Activated B cell treated with CpG ODN at 0.5 μM for 24 hours (primary cell): ENCODE measurements at regions of chr3 and their contacts with region 1.

Region 1: GRCh38 chr3:30112902-30113484 is 493.4 kb upstream of the TGFBR2 start:
- DNase-seq: no peak
- ATAC-seq: no peak
- H3K4me3 Mint-ChIP-seq: no peak overlapping the region
- H3K27ac Mint-ChIP-seq: no peak overlapping the region
- H3K4me1 Mint-ChIP-seq: peaks cover 10% of the 10 kb centered on the region
- H3K27me3 Mint-ChIP-seq: no peaks in the 10 kb centered on the region
- CTCF ChIP-seq: no peak

Region 2: GRCh38 chr3:30084971-30085403 is 28.0 kb before region 1 on chr3:
- CTCF ChIA-PET with region 1: no interaction called
- POLR2A ChIA-PET with region 1: no interaction called
- intact Hi-C with region 1: no loop called
- DNase-seq: no peak
- ATAC-seq: no peak
- H3K4me3 Mint-ChIP-seq: no peak overlapping the region
- H3K27ac Mint-ChIP-seq: no peak overlapping the region
- H3K4me1 Mint-ChIP-seq: no peaks in the 10 kb centered on the region
- H3K27me3 Mint-ChIP-seq: peaks cover 8% of the 10 kb centered on the region
- CTCF ChIP-seq: no peak

Region 3: GRCh38 chr3:30319713-30320112 is 206.7 kb after region 1 on chr3:
- CTCF ChIA-PET with region 1: no interaction called
- POLR2A ChIA-PET with region 1: no interaction called
- intact Hi-C with region 1: loop called (anchors 1 kb)
- DNase-seq: no peak
- ATAC-seq: peak; percentile 98
- H3K4me3 Mint-ChIP-seq: no peak overlapping the region
- H3K27ac Mint-ChIP-seq: no peak overlapping the region
- H3K4me1 Mint-ChIP-seq: peaks cover 6% of the 10 kb centered on the region
- H3K27me3 Mint-ChIP-seq: no peaks in the 10 kb centered on the region
- CTCF ChIP-seq: peak; percentile 46

Region 4: GRCh38 chr3:30628901-30629590 is 516.1 kb after region 1 on chr3:
- CTCF ChIA-PET with region 1: interaction called, 7 read pairs
- POLR2A ChIA-PET with region 1: no interaction called
- intact Hi-C with region 1: loop called (anchors 10 kb)
- DNase-seq: no peak
- ATAC-seq: peak; percentile 52
- H3K4me3 Mint-ChIP-seq: peak overlapping the region; percentile 49
- H3K27ac Mint-ChIP-seq: peak overlapping the region; percentile 91
- H3K4me1 Mint-ChIP-seq: peaks cover 94% of the 10 kb centered on the region
- H3K27me3 Mint-ChIP-seq: no peaks in the 10 kb centered on the region
- CTCF ChIP-seq: no peak

Region 5: GRCh38 chr3:30751610-30752299 is 638.8 kb after region 1 on chr3:
- CTCF ChIA-PET with region 1: interaction called, 13 read pairs
- POLR2A ChIA-PET with region 1: no interaction called
- intact Hi-C with region 1: loop called (anchors 1 kb)
- DNase-seq: peak; percentile 20
- ATAC-seq: peak; percentile 72
- H3K4me3 Mint-ChIP-seq: no peak overlapping the region
- H3K27ac Mint-ChIP-seq: no peak overlapping the region
- H3K4me1 Mint-ChIP-seq: peaks cover 9% of the 10 kb centered on the region
- H3K27me3 Mint-ChIP-seq: peaks cover 7% of the 10 kb centered on the region
- CTCF ChIP-seq: no peak

Region 6: GRCh38 chr3:30768703-30769685 is 656.0 kb after region 1 on chr3:
- CTCF ChIA-PET with region 1: no interaction called
- POLR2A ChIA-PET with region 1: no interaction called
- intact Hi-C with region 1: loop called (anchors 1 kb)
- DNase-seq: peak; percentile 27
- ATAC-seq: no peak
- H3K4me3 Mint-ChIP-seq: no peak overlapping the region
- H3K27ac Mint-ChIP-seq: no peak overlapping the region
- H3K4me1 Mint-ChIP-seq: no peaks in the 10 kb centered on the region
- H3K27me3 Mint-ChIP-seq: peaks cover 14% of the 10 kb centered on the region
- CTCF ChIP-seq: no peak

Region 7: DNA sequence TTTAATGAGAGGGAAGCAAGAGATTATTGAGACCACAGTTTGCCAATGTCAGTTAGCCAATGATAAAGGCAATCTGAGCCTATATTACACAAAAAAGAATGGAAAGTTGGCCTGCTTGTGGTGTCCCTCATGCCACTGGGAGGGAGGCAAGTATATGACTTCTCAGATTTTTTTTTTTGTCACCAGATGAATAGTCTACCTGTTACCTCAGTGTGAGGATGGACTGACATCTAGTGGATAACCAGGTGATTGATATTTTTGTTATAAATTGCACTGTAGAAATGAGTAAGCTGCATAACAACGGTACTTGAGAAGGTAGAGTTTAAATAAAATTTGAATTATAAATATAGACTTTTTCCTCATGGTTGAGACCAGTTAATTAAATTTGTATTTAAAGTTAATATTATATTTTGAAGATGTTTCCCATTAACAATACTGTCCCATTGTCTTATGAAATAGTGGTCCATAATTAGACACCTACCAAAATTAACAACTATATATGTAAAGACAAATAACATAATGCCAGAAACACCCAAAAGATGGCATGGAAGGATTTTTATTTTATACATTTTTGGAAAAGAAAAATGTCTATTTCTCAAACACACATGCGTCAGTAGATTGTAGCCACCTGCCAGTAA is 1019.3 kb after region 1 on chr3:
- CTCF ChIA-PET with region 1: no interaction called
- POLR2A ChIA-PET with region 1: no interaction called
- intact Hi-C with region 1: loop called (anchors 1 kb)
- DNase-seq: no peak
- ATAC-seq: no peak
- H3K4me3 Mint-ChIP-seq: no peak overlapping the region
- H3K27ac Mint-ChIP-seq: no peak overlapping the region
- H3K4me1 Mint-ChIP-seq: no peaks in the 10 kb centered on the region
- H3K27me3 Mint-ChIP-seq: no peaks in the 10 kb centered on the region
- CTCF ChIP-seq: peak; percentile 14